ENCODE measurements at regions of chr7 and their contacts with region 1.

Region 1: DNA sequence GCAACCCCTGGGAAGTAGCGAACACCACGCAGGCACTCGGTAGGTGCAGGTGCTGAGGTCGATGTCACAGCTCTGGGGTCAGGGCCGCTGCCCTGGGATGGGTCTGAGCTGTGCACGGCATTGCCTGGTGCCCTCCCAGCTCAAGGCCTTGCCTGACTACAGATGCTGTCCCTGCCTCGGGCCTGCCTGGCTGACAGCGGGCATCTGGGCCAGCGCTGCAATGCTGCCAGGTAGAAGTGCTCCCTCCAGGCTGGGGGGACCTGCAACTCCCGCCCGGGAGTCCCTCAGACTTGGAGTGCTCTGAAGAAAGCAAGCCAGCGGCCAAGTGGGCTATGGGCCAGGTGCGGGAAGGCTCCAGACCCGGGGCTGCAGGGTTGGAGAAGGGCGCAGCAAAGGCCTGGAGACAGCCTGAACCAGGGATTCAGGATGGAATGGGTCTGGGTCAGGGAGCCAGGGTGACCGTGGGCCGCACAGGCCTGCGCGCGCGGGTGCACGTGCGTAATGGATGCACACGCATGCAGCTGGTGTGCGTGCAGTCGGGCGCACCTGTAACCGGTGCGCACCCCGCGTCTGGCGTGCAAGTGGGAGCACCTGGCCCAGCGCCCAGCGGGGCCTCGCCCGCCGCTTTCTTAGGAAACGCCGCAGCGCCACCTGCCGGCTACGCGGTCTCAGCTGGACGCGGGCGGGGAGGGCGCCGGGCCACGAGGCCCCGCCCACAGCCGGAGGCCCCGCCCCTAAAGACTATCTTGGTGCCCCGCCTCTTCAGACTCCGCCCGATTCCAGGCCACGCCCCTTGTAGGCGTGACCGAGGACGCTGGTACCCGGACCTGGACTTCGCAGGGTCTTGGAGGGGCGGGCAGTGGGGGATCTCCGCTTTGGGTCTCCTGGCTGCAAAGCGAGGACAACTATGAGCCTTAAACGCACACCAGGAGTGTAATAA is 46.7 kb downstream of the MICALL2 start:
- DNase-seq: peak; percentile 95
- H3K4me3 Mint-ChIP-seq: no peak overlapping the region
- H3K27ac Mint-ChIP-seq: no peak overlapping the region
- H3K4me1 Mint-ChIP-seq: peaks cover 14% of the 10 kb centered on the region
- H3K27me3 Mint-ChIP-seq: peaks cover 7% of the 10 kb centered on the region

Region 2: GRCh38 chr7:1193593-1194424 is 218.8 kb before region 1 on chr7:
- intact Hi-C with region 1: loop called (anchors 10 kb)
- DNase-seq: peak; percentile 81
- H3K4me3 Mint-ChIP-seq: no peak overlapping the region
- H3K27ac Mint-ChIP-seq: no peak overlapping the region
- H3K4me1 Mint-ChIP-seq: peaks cover 22% of the 10 kb centered on the region
- H3K27me3 Mint-ChIP-seq: peaks cover 6% of the 10 kb centered on the region

Region 3: GRCh38 chr7:1225441-1226185 is 187.0 kb before region 1 on chr7:
- intact Hi-C with region 1: loop called (anchors 10 kb)
- DNase-seq: peak; percentile 76
- H3K4me3 Mint-ChIP-seq: no peak overlapping the region
- H3K27ac Mint-ChIP-seq: peak overlapping the region; percentile 51
- H3K4me1 Mint-ChIP-seq: peaks cover 2% of the 10 kb centered on the region
- H3K27me3 Mint-ChIP-seq: peaks cover 56% of the 10 kb centered on the region

Region 4: GRCh38 chr7:1368682-1369571 is 43.7 kb before region 1 on chr7:
- intact Hi-C with region 1: no loop called
- DNase-seq: peak; percentile 75
- H3K4me3 Mint-ChIP-seq: peak overlapping the region; percentile 45
- H3K27ac Mint-ChIP-seq: no peak overlapping the region
- H3K4me1 Mint-ChIP-seq: peaks cover 2% of the 10 kb centered on the region
- H3K27me3 Mint-ChIP-seq: peaks cover 22% of the 10 kb centered on the region

Region 5: GRCh38 chr7:1432411-1433082 is 20.0 kb after region 1 on chr7:
- intact Hi-C with region 1: loop called (anchors 1 kb)
- DNase-seq: peak; percentile 94
- H3K4me3 Mint-ChIP-seq: no peak overlapping the region
- H3K27ac Mint-ChIP-seq: no peak overlapping the region
- H3K4me1 Mint-ChIP-seq: peaks cover 2% of the 10 kb centered on the region
- H3K27me3 Mint-ChIP-seq: peaks cover 2% of the 10 kb centered on the region

Region 6: DNA sequence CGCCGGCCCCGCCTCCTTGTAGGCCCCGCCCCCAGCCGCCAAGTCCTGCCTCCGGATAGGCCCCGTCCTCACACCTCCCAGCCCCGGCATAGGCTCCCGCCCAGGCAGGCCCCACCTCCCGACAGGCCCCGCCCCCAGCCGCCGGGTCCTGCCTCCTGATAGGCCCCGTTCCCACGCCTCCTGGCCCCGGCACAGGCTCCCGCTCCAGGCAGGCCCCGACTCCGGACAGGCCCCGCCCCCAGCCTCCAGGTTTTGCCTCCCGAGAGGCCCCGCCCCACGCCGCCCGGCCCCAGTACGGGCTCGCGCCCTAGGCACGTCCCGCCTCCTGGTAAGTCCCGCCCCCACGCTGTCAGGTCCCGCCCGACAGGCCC is 46.9 kb after region 1 on chr7:
- intact Hi-C with region 1: loop called (anchors 1 kb)
- DNase-seq: peak; percentile 99
- H3K4me3 Mint-ChIP-seq: peak overlapping the region; percentile 78
- H3K27ac Mint-ChIP-seq: no peak overlapping the region
- H3K4me1 Mint-ChIP-seq: peaks cover 2% of the 10 kb centered on the region
- H3K27me3 Mint-ChIP-seq: peaks cover 2% of the 10 kb centered on the region

Measured in activated CD4-positive, alpha-beta T cell treated with anti-CD3 and anti-CD28 coated beads, Interleukin-2, amount 10 ng/mL, durations not matched to agents 24 days and 14 days (primary cell).